Naive thymus-derived CD4-positive, alpha-beta T cell (primary cell): ENCODE measurements at regions of chr15 and their contacts with region 1.

Region 1: DNA sequence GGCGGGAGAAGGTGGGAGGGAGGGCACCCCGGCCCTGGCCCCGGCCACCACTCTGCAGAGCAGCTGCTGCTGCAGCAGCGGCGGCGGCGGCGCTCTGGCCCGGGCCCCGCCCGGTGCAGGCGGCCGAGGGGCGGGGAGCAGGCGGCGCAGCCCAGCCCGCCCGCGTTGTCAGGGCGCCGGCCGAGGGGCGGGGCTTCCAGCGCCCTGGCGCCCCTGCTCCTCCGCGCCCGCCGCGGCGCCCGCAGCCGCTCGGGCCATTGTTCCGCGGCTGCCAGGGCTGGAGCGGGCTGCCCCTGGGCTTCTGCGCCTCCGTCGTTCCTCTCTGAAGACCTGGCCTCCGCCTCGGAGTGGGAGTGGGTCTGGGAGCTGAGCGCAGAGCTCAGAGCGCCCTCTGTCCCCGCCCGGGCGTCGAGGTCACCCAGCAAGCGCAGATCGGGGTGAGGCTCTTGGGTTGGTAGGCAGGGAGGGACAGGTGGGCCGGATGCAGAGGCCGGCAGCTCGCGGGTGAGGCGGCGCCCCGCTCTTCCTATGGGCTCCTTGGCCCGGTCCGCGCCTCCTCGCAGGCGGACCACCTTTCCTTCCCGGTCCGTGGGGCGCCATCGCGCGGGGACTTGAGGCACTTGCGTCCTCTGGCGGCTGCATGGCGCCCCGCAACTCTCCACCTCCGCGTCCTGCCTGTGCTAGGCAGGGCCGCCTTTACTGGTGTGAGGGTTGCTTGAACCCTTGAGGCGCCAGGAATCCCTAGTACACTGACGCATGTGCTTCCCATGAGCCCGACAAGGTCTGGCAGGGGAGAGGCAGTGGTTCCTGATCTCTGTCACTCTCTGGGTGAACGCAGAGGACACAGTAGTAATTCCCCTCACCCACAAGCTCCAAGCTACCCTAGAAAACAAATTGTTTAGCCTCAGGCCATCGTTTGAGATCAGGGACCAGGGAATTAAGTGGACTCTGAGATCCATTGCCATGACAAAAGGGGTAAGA is at the start of gene LPCAT4:
- DNase-seq: peak; percentile 81 to 91 (median 89)
- ATAC-seq: peak; percentile 94
- H3K4me3 ChIP-seq: peak within 1 kb of the TSS; percentile 82
- H3K4me3 Mint-ChIP-seq: peak within 1 kb of the TSS; percentile 94 to 99 (median 96)
- H3K27ac ChIP-seq: peak within 1 kb of the TSS; percentile 88
- H3K27ac Mint-ChIP-seq: peak within 1 kb of the TSS; percentile 86 to 98 (median 94)
- H3K4me1 ChIP-seq: peaks cover 13 to 17% of the 10 kb centered on the region in 2 donors
- H3K4me1 Mint-ChIP-seq: peaks cover 5 to 45% (median 27%) of the 10 kb centered on the region in 7 donors
- H3K27me3 ChIP-seq: no peaks in the 10 kb centered on the region
- H3K27me3 Mint-ChIP-seq: no peaks in the 10 kb centered on the region
- total RNA-seq, gene LPCAT4: 40.0 to 95.5 (median 63.4) TPM

Region 2: GRCh38 chr15:34001536-34001935 is 365.9 kb before region 1 on chr15:
- CTCF ChIA-PET with region 1: no interaction called
- POLR2A ChIA-PET with region 1: no interaction called
- intact Hi-C with region 1: no loop called
- DNase-seq: no peak
- ATAC-seq: no peak
- H3K4me3 ChIP-seq: no peak overlapping the region
- H3K4me3 Mint-ChIP-seq: no peak overlapping the region
- H3K27ac ChIP-seq: no peak overlapping the region
- H3K27ac Mint-ChIP-seq: no peak overlapping the region
- H3K4me1 ChIP-seq: no peaks in the 10 kb centered on the region
- H3K4me1 Mint-ChIP-seq: no peaks in the 10 kb centered on the region
- H3K27me3 ChIP-seq: no peaks in the 10 kb centered on the region
- H3K27me3 Mint-ChIP-seq: no peaks in the 10 kb centered on the region

Region 3: GRCh38 chr15:34038023-34038870 is 329.1 kb before region 1 on chr15:
- CTCF ChIA-PET with region 1: no interaction called
- POLR2A ChIA-PET with region 1: interaction called, 7 read pairs
- intact Hi-C with region 1: loop called (anchors 1 to 10 kb)
- DNase-seq: peak; percentile 52 to 76 (median 72)
- ATAC-seq: peak; percentile 90
- H3K4me3 ChIP-seq: peak overlapping the region; percentile 100
- H3K4me3 Mint-ChIP-seq: peak overlapping the region; percentile 80 to 97 (median 94)
- H3K27ac ChIP-seq: peak overlapping the region; percentile 80
- H3K27ac Mint-ChIP-seq: peak overlapping the region; percentile 87 to 96 (median 94)
- H3K4me1 ChIP-seq: peaks cover 8 to 14% of the 10 kb centered on the region in 2 donors
- H3K4me1 Mint-ChIP-seq: peaks cover 12 to 25% (median 23%) of the 10 kb centered on the region in 7 donors
- H3K27me3 ChIP-seq: no peaks in the 10 kb centered on the region
- H3K27me3 Mint-ChIP-seq: no peaks in the 10 kb centered on the region

Region 4: GRCh38 chr15:34209421-34210282 is 157.7 kb before region 1 on chr15 and contains the start of gene KATNBL1:
- CTCF ChIA-PET with region 1: no interaction called
- POLR2A ChIA-PET with region 1: interaction called, 3 read pairs
- intact Hi-C with region 1: loop called (anchors 1 kb)
- DNase-seq: peak; percentile 81 to 98 (median 89)
- ATAC-seq: peak; percentile 100
- H3K4me3 ChIP-seq: peak within 1 kb of the TSS; percentile 69
- H3K4me3 Mint-ChIP-seq: peak within 1 kb of the TSS; percentile 84 to 94 (median 91)
- H3K27ac ChIP-seq: peak within 1 kb of the TSS; percentile 77
- H3K27ac Mint-ChIP-seq: peak within 1 kb of the TSS; percentile 28 to 93 (median 84)
- H3K4me1 ChIP-seq: peaks cover 0 to 5% of the 10 kb centered on the region in 2 donors
- H3K4me1 Mint-ChIP-seq: peaks cover 8 to 33% (median 25%) of the 10 kb centered on the region in 7 donors
- H3K27me3 ChIP-seq: no peaks in the 10 kb centered on the region
- H3K27me3 Mint-ChIP-seq: peaks cover 0 to 4% (median 0%) of the 10 kb centered on the region in 5 donors
- total RNA-seq, gene KATNBL1: 21.8 to 40.3 (median 33.0) TPM

Region 5: DNA sequence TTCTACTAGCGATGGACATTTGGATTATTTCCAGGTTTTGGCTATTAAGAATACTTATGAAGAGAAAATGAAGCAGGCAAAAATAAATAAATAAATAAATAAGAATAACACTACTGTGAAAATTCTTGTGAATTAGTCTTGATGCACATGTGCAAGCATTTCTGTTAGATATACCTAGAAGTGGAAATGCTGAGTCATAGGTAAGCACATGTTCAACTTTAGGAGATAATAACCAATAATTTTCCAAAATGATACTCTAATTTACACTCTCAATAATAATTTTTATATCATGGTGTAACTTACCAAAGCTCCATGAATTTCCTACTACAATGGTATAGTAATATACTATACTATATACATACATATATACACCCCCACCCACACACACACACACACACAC is 119.2 kb before region 1 on chr15:
- CTCF ChIA-PET with region 1: interaction called, 68 read pairs
- POLR2A ChIA-PET with region 1: interaction called, 3 read pairs
- intact Hi-C with region 1: loop called in 1 of 2 experiments (anchors 10 kb)
- DNase-seq: no peak
- ATAC-seq: no peak
- H3K4me3 ChIP-seq: no peak overlapping the region
- H3K4me3 Mint-ChIP-seq: no peak overlapping the region
- H3K27ac ChIP-seq: no peak overlapping the region
- H3K27ac Mint-ChIP-seq: no peak overlapping the region
- H3K4me1 ChIP-seq: no peaks in the 10 kb centered on the region
- H3K4me1 Mint-ChIP-seq: no peaks in the 10 kb centered on the region
- H3K27me3 ChIP-seq: no peaks in the 10 kb centered on the region
- H3K27me3 Mint-ChIP-seq: no peaks in the 10 kb centered on the region

Region 6: GRCh38 chr15:34337557-34338306 is 29.7 kb before region 1 on chr15 and contains the start of gene SLC12A6:
- CTCF ChIA-PET with region 1: interaction called, 27 read pairs
- POLR2A ChIA-PET with region 1: interaction called, 49 read pairs
- intact Hi-C with region 1: loop called (anchors 1 kb)
- DNase-seq: peak; percentile 90 to 93 (median 92)
- ATAC-seq: peak; percentile 94
- H3K4me3 ChIP-seq: peak within 1 kb of the TSS; percentile 96
- H3K4me3 Mint-ChIP-seq: peak within 1 kb of the TSS; percentile 90 to 100 (median 98)
- H3K27ac ChIP-seq: peak within 1 kb of the TSS; percentile 92
- H3K27ac Mint-ChIP-seq: peak within 1 kb of the TSS; percentile 82 to 99 (median 98)
- H3K4me1 ChIP-seq: peaks cover 30 to 41% of the 10 kb centered on the region in 2 donors
- H3K4me1 Mint-ChIP-seq: peaks cover 35 to 72% (median 60%) of the 10 kb centered on the region in 7 donors
- H3K27me3 ChIP-seq: no peaks in the 10 kb centered on the region
- H3K27me3 Mint-ChIP-seq: no peaks in the 10 kb centered on the region
- total RNA-seq, gene SLC12A6: 39.2 to 122 (median 111) TPM

Region 7: GRCh38 chr15:34437687-34438086 is 70.3 kb after region 1 on chr15 and contains the start of gene GOLGA8A:
- CTCF ChIA-PET with region 1: no interaction called
- POLR2A ChIA-PET with region 1: no interaction called
- intact Hi-C with region 1: loop called in 1 of 2 experiments (anchors 1 kb)
- DNase-seq: peak in 8 of 9 donors; percentile 62 to 88 (median 82)
- ATAC-seq: peak; percentile 88
- H3K4me3 ChIP-seq: peak within 1 kb of the TSS; percentile 51
- H3K4me3 Mint-ChIP-seq: peak within 1 kb of the TSS in 9 of 10 donors; percentile 81 to 98 (median 95)
- H3K27ac ChIP-seq: peak within 1 kb of the TSS; percentile 60
- H3K27ac Mint-ChIP-seq: peak within 1 kb of the TSS in 8 of 9 donors; percentile 78 to 96 (median 94)
- H3K4me1 ChIP-seq: peaks cover 6 to 12% of the 10 kb centered on the region in 2 donors
- H3K4me1 Mint-ChIP-seq: peaks cover 3 to 32% (median 21%) of the 10 kb centered on the region in 7 donors
- H3K27me3 ChIP-seq: no peaks in the 10 kb centered on the region
- H3K27me3 Mint-ChIP-seq: peaks cover 0 to 16% (median under 1%) of the 10 kb centered on the region in 5 donors
- total RNA-seq, gene GOLGA8A: 147 to 361 (median 158) TPM

Region 8: GRCh38 chr15:34987985-34988873 is 620.8 kb after region 1 on chr15 and contains the start of gene ZNF770:
- CTCF ChIA-PET with region 1: no interaction called
- POLR2A ChIA-PET with region 1: no interaction called
- intact Hi-C with region 1: loop called in 1 of 2 experiments (anchors 1 kb)
- DNase-seq: peak; percentile 67 to 91 (median 85)
- ATAC-seq: peak; percentile 95
- H3K4me3 ChIP-seq: peak within 1 kb of the TSS; percentile 99
- H3K4me3 Mint-ChIP-seq: peak within 1 kb of the TSS; percentile 93 to 100 (median 98)
- H3K27ac ChIP-seq: peak within 1 kb of the TSS; percentile 97
- H3K27ac Mint-ChIP-seq: peak within 1 kb of the TSS; percentile 96 to 100 (median 99)
- H3K4me1 ChIP-seq: peaks cover 22 to 25% of the 10 kb centered on the region in 2 donors
- H3K4me1 Mint-ChIP-seq: peaks cover 20 to 55% (median 45%) of the 10 kb centered on the region in 7 donors
- H3K27me3 ChIP-seq: no peaks in the 10 kb centered on the region
- H3K27me3 Mint-ChIP-seq: no peaks in the 10 kb centered on the region
- total RNA-seq, gene ZNF770: 32.5 to 69.9 (median 50.2) TPM